ENCODE measurements at regions of chr10 and their contacts with region 1.

Region 1: DNA sequence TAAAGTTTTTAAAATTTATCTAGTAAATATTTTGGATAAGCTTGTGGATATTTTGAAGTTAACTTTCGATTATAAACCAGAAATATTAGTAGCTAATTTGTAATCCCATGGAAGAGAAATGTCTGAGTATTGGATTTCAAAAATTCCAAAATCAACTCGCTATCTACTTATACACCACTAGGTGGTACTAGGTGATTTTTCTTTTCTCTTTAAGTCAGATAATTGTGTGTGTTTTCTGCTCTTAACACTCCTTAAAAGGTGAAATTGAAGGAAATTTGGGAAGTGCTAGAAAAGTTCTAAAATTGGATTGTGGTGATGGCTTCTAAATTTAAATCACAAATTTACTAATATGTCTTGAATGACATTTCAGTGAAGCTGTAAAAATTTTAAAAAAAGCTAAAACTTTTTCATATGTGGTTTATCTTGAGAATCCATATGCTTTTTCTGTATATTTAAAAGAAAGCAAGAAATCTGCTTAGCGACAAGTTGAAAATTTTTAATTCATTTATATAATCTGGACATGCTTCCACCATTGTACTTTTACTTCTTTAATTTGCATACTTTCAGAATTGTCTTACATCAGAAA is 90.2 kb downstream of the IPMK start:
- DNase-seq: no peak

Region 2: DNA sequence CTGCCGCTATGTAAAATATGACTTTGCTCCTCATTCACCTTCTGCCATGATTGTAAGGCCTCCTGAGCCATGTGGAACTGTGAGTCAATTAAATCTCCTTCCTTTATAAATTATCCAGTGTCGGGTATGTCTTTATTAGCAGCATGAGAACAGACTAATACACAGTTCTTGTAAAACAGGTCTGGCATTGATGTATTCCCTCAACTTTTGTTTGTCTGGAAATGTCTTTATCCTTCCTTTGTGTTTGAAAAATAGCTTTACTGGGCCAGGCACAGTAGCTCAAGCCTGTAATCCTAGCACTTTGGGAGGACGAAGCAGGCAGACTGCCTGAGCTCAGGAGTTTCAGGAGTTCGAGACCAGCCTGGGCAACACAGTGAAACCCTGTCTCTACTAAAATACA is 75.7 kb after region 1 on chr10:
- intact Hi-C with region 1: no loop called
- DNase-seq: no peak

Region 3: DNA sequence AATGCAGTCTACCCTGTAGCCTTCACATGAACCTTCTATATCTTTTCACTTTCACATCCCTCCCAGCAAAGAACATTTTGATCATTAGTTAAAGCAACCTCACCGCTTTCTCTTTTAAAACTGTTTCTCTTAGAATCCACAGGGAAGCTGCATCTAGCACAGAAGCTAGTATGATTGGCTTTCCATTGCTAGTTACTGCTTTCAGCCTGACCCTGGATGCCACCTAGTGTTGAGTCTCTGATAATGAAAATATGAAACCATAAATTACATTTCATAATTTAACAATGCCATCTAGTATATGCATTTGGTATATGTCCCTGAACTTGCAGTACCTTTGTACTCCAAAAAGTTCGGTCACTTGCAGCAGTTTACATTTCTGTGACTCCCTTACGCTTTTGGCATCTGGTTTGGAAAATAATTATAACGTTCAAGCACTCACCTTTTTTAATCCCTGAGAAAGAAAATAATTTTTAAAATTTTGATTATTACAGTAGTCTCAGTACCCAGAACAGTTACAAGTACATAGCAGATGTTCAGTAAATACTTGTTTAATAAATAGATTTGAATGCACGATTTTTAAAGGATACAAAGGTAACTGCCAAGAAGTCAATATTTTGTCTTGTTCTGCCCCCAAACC is 114.2 kb after region 1 on chr10:
- intact Hi-C with region 1: loop called (anchors 1 kb)
- DNase-seq: peak in 1 of 10 donors; percentile 10

Measured in posterior cingulate gyrus (tissue), 11 donors.